Activated B cell treated with CpG ODN at 0.5 μM for 24 hours (primary cell): ENCODE measurements at regions of chr22 and their contacts with region 1.

Region 1: DNA sequence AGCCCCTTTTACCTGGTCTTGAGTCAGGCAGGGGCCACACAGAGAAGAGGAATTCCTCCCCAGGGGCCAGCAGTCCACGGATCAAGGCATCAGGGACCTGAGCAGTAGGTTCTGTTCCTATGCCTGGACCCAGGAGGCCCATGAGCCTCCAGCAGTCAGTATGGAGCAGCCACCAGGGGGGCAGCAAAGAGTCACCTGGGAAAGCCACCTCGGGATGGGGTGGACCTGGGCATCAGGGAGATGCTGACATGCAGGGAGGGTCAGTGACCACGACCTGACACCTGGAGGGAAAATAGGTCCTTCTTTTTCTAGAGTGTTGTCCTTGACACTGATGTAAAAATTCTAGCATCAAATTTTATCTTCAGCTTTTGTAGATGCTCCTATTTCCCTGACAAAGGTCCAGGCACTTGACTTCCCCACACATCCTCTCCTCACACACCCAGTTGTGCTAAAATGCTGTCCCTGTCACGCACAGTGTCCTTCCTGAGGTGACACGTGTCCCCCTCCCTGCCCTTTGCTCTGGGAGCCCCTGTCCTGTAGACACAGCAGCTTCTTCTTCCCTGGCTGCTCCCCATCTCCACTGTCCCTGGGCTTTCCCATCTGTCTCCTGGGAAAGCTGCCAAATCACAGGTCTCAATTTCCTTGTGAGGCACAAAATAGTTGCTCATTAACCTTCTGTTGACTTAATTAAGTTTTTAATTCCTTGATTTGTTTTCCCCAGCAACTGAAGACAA is 70.0 kb upstream of the IGLL5 start:
- DNase-seq: no peak
- ATAC-seq: no peak
- H3K4me3 Mint-ChIP-seq: no peak overlapping the region
- H3K27ac Mint-ChIP-seq: no peak overlapping the region
- H3K4me1 Mint-ChIP-seq: peaks cover 51% of the 10 kb centered on the region
- H3K27me3 Mint-ChIP-seq: peaks cover 18% of the 10 kb centered on the region
- CTCF ChIP-seq: no peak

Region 2: DNA sequence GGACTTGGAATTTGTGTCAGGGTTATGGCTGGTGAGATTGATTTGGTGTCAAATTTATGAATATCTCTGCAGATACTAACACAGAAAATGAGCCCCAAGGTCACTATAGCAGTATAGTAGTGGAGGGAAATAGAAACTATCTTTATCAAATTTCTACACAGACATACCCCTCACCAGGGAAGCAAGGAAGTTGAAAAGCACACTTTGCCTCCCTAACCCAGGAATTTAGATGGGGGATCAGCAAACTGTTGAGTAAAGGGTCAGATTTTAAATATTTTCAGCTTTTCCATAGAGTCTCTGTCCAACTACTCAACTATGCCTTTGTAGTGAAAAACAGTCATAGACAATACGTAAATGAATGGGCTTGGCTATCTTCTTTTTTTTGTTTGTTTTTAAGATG is 1887.6 kb before region 1 on chr22:
- CTCF ChIA-PET with region 1: no interaction called
- POLR2A ChIA-PET with region 1: interaction called, 10 read pairs
- intact Hi-C with region 1: no loop called
- DNase-seq: no peak
- ATAC-seq: no peak
- H3K4me3 Mint-ChIP-seq: no peak overlapping the region
- H3K27ac Mint-ChIP-seq: no peak overlapping the region
- H3K4me1 Mint-ChIP-seq: peaks cover 60% of the 10 kb centered on the region
- H3K27me3 Mint-ChIP-seq: no peaks in the 10 kb centered on the region
- CTCF ChIP-seq: no peak

Region 3: GRCh38 chr22:22893077-22893805 is 75.6 kb after region 1 on chr22:
- CTCF ChIA-PET with region 1: no interaction called
- POLR2A ChIA-PET with region 1: no interaction called
- intact Hi-C with region 1: no loop called
- DNase-seq: peak; percentile 27
- ATAC-seq: peak; percentile 53
- H3K4me3 Mint-ChIP-seq: peak overlapping the region; percentile 75
- H3K27ac Mint-ChIP-seq: peak overlapping the region; percentile 82
- H3K4me1 Mint-ChIP-seq: peaks cover 77% of the 10 kb centered on the region
- H3K27me3 Mint-ChIP-seq: peaks cover 8% of the 10 kb centered on the region
- CTCF ChIP-seq: no peak

Region 4: DNA sequence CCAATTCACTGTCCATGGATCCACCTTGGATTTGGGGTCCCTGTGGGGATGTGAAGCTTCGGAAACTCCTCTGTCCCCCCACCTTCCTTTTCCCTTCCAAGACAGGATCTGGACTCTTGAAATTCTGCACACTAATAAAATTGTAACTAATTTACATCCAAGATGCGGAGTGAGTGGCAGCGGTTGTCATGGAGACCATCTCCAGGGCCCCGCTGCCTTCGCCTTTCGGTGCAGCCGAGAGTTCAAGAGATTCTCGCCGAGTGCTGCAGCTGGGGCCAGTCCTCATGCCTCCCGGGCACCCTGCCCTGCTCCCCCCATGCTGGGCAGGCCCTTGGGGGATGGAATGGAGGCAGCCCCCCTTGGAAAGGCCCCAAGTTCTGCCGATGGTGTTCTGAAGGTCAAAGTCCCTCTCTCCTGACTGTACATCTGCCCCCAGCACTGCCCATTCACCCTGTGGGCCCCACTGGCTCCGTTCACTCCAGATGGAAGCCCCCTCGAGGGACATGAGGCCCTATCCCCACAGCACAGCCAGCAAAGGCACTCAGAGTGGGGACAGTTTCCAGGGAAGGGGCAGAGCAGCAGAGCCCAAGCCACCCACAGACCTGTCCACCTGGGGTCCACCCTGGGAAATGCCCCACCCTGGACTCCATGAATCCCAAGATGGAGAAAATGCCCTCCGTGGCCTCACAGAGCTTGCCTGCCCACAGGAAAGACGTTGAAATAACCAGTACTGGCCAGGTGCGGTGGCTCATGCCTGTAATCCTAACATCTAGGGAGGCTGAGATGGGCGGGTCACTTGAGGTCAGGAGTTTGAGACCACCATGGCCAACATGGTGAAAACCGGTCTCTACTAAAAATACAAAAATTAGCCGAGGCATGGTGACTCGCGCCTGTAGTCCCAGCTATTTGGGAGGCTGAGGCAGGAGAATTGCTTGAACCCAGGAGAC is 736.6 kb after region 1 on chr22:
- CTCF ChIA-PET with region 1: no interaction called
- POLR2A ChIA-PET with region 1: no interaction called
- intact Hi-C with region 1: no loop called
- DNase-seq: no peak
- ATAC-seq: no peak
- H3K4me3 Mint-ChIP-seq: no peak overlapping the region
- H3K27ac Mint-ChIP-seq: no peak overlapping the region
- H3K4me1 Mint-ChIP-seq: no peaks in the 10 kb centered on the region
- H3K27me3 Mint-ChIP-seq: peaks cover 14% of the 10 kb centered on the region
- CTCF ChIP-seq: no peak